GM13976 (cell line): ENCODE measurements at regions of chr1 and their contacts with region 1.

Region 1: DNA sequence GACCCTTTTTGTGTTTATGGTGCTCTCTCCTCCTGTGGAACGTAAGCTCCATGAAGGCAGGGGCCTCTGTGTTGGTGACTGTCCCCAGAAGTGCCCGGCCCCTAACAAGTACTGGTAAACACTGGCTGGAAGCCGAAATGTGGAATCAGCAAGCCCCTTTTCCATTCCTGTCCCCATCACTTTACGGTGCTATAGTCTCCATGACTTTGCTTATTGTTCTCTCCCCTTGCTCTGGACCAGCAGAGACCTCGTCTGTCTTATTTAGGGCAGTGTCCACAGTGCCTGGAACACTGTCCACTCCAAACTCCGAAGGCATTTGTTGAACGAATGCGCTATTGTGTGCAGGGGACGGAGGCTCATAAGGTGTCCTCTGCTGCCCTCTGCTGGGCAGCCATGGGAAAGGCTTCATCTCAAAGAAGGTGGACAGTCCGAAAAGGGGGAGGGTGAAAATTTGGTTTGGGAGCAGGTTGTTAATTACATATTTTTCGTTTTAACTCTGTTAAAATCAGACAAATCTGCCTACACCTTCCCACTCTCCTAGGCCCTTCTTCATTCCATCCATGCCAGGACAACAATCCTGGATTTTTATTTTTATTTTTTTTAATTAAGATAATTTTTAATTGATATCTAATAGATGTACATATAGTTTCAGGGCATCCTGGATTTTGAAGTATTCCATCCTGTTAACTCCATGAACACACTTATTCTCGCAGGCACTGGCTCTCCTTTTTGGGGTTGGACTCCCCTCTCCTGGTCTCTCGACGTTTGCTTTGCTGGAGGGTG is 115.6 kb downstream of the PGBD5 start:
- DNase-seq: peak; percentile 85
- CTCF ChIP-seq: peak; percentile 68

Region 2: DNA sequence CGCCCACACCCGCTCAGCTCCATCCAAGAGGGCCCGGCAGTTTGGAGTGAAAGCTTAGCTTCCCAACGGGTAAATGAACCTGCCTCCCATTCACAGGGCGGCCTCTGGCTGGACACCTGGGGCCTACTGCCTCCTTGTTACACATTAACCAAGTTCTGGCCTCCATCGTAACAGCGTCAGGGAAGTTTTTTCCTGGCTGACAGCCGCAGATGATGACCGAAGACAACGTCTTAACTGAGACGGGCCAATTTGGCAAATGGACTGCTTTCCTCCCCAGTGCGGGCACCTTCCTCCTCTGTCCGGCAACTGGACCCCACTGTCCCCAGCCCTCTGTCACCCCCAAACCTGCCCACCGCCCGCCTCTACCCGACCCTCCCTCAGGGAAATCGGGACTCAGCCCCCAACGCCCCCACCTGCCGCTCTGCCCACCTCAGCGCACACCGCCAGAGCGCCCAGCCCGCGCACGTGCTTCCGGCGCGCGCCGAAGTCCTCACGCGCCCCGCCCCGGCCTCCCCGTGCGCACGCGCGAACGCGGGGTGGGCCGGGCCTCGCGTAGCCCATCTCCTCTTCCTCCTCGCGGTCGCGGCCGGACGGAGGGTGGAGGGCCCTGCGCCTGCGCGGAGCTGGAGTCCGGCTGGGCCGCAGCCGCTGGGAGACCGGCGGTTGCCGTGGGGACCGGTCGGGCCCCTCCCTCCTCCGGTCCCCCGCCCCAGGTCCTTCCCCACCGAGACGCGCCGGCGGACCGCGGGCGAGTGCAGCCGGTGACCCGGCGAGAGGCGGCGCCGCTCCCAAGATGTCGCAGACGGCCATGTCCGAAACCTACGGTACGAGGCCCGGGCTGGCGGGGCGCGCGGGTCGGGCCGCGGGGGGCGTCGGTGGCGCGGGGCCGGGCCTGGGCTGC is 1039.8 kb before region 1 on chr1 and contains the start of gene RAB4A:
- in situ Hi-C with region 1: loop called (anchors 25 kb)
- DNase-seq: peak; percentile 95
- CTCF ChIP-seq: no peak

Region 3: DNA sequence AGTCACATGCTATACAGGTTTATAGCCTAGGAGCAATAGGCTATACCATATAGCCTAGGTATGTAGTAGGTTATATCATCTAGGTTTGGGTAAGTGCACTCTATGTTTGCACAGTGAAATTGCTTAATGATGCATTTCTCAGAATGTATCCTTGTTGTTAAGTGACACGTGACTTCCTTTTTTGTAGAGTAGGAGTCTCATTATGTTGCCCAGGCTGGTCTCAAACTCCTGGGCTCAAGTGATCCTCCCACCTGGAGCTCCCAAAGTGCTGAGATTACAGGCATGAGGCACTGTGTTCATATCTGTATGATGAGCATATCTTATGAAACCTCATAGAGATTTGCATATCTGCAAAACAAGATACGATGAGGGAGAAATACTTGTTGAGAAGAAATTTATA is 738.3 kb before region 1 on chr1:
- in situ Hi-C with region 1: no loop called
- DNase-seq: no peak
- CTCF ChIP-seq: no peak

Region 4: DNA sequence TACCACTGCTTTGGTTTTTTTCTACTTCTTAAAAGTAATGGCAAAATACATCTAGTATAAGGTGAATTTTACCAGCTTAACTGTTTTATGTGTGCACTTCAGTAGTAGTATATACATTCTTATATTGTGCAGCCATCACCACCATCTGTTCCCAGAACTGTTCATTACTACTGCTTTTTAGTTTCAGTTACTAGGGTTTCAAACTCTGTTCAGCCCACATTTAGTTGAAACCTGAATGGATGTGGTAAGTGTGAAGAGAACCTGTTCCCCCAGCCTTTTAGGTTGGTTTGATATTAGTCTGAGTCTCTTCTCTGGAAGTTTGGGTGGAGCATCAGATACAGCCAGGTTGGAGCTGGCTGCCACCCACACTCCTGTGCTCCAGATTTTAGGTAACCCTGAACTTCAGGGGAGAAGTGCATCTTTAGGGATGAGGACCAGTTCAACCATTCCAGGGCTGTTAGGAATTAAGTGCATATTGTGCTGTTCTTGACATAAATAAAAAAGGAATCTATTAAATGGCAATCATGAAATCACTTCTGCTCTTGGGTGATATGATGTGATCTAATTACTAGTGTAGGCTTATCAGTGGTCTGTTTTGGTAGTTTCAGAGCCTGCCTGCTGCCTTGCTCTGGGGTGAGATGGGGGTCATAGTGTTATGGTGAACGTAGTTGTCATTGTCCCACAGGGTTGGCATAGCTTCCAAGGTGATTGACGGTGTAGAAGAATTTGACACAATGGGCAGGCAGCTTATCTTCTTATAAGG is 652.4 kb before region 1 on chr1:
- in situ Hi-C with region 1: loop called (anchors 10 kb)
- DNase-seq: no peak
- CTCF ChIP-seq: no peak